Gastrocnemius medialis (tissue), 4 donors: ENCODE measurements at regions of chr9 and their contacts with region 1.

Region 1: DNA sequence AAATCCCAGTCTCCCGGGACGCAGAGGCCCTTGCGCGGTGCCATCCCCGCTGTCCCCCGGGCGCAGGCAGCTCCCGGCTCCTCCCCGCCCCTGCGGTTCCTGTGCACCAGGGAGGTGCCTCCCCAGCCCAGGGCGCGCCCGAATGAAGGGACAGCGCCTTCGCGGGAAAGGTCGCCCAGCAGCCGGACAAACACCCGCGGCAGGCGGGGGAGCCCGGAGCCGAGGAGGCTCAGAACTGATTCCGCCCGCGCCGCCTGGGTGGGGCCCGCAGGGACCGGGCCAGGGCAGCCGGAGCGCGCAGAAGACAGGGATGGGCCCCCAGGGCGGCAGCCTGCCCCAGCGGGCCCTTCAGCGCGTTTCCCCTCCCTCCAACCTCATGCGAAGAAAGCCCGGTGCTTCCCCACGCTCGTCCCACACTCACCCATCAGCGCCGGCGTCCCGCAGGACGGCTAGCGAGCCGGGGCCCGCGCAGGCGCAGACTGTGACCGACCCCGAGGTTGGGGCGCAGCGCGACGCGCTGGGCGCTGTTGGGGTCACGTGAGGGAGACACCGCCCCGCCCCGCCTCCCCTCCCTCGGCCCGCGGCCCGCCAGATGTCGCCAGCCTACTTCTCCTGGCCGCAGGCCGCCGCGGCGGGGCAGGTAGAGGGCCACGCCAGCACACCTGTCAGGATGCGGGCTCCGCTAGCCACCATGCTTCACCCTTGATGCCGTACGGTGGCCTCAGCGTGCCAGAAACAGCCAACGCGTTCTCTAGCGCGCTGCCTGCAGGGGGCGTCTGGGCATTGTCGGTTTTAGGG is at the start of gene SLC25A51:
- DNase-seq: peak; percentile 80 to 91
- ATAC-seq: peak; percentile 92 to 95
- H3K4me3 ChIP-seq: peak within 1 kb of the TSS; percentile 75 to 93 (median 85)
- H3K27ac ChIP-seq: peak within 1 kb of the TSS; percentile 86 to 90 (median 88)
- H3K4me1 ChIP-seq: peaks cover 16 to 17% of the 10 kb centered on the region in 2 donors
- H3K27me3 ChIP-seq: no peaks in the 10 kb centered on the region
- CTCF ChIP-seq: peak; percentile 90 to 97 (median 96)
- POLR2A ChIP-seq: peak; percentile 74 to 81
- total RNA-seq, gene SLC25A51: 16.0 to 30.7 (median 22.2) TPM

Region 2: DNA sequence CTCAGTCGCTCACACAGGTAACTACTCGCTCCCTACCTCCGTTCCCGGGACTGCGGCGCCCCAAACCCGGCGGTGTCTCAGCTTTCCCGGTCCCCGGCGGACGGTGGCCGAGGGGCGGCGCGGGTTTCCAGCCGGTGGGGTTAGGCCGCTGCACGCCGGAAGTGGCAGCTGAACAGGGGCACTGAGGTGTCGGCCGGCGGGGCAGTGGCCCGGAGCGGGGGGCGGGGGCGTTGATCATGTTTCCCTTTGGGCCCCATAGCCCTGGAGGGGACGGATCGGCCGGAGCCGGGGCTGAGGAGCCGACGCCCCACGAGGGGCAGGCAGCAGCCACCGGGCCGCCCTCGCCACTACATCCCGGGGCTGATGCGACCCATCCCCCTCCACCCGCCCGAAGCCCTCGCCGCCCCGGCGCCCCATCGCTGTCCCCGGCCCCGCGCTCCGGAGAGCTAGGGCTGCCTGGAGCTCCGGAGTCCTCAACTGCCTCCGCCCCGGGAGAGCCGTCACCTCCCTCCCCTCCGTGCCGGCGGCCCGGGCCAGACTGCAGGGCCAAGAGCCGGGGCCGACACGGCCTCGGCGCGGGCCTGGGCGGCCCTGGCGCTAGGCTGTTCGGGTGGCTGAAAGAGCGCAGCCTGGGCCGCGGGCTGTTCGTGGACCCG is 103.1 kb before region 1 on chr9 and contains the start of gene DCAF10:
- in situ Hi-C with region 1: loop called in 1 of 4 experiments (anchors 25 kb)
- intact Hi-C with region 1: loop called (anchors 10 kb)
- DNase-seq: peak; percentile 73 to 80
- ATAC-seq: peak; percentile 92 to 93
- H3K4me3 ChIP-seq: peak within 1 kb of the TSS; percentile 55 to 98 (median 80)
- H3K27ac ChIP-seq: peak within 1 kb of the TSS; percentile 74 to 91 (median 86)
- H3K4me1 ChIP-seq: peaks cover 28 to 33% of the 10 kb centered on the region in 2 donors
- H3K27me3 ChIP-seq: no peaks in the 10 kb centered on the region
- CTCF ChIP-seq: peak in 1 of 5 experiments; percentile 38
- POLR2A ChIP-seq: peak; percentile 59 to 77
- total RNA-seq, gene DCAF10: 11.0 to 24.5 (median 17.0) TPM

Region 3: GRCh38 chr9:37984672-37985611 is 81.1 kb after region 1 on chr9:
- in situ Hi-C with region 1: no loop called
- intact Hi-C with region 1: no loop called
- DNase-seq: no peak
- ATAC-seq: peak in 1 of 2 donors; percentile 42
- H3K4me3 ChIP-seq: no peak overlapping the region
- H3K27ac ChIP-seq: no peak overlapping the region
- H3K4me1 ChIP-seq: peaks cover 3 to 6% of the 10 kb centered on the region in 2 donors
- H3K27me3 ChIP-seq: no peaks in the 10 kb centered on the region
- CTCF ChIP-seq: no peak
- POLR2A ChIP-seq: no peak

Region 4: GRCh38 chr9:38017149-38017884 is 113.5 kb after region 1 on chr9:
- in situ Hi-C with region 1: no loop called
- intact Hi-C with region 1: no loop called
- DNase-seq: peak; percentile 53 to 74
- ATAC-seq: peak; percentile 91 to 92
- H3K4me3 ChIP-seq: peak overlapping the region; percentile 16 to 30 (median 21)
- H3K27ac ChIP-seq: peak overlapping the region in 2 of 4 donors; percentile 20 to 26
- H3K4me1 ChIP-seq: peaks cover 29 to 39% of the 10 kb centered on the region in 2 donors
- H3K27me3 ChIP-seq: no peaks in the 10 kb centered on the region
- CTCF ChIP-seq: peak; percentile 39 to 67 (median 58)
- POLR2A ChIP-seq: no peak

Region 5: DNA sequence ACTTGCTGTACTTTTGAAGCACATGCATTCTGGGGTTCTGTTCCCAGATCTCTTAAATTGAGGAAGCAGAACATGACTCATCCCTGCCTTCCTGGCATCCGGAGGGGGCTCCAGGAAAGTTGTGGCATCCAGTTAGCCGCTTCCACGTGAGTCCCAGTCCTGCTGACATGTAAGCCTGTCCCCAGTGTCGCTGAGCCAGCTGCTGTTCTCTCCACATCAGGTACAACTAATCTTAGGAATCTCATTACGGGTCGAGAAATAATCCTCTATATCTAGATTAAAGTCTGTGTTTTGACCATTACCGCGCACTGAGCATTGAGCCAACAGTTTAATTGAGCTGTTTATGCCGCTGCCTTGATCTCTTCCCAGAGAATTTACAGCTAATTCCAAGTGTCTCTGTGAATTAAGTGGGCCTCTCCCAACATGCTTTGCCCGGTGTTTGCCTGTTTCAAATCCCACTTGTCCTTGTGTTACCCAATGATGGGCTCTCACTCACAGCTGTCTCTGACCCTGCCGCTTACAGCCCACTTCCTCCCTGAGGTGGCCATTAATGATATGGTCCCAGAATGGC is 175.7 kb after region 1 on chr9:
- in situ Hi-C with region 1: loop called in 1 of 4 experiments (anchors 10 kb)
- intact Hi-C with region 1: no loop called
- DNase-seq: peak; percentile 54 to 71
- ATAC-seq: peak; percentile 86 to 87
- H3K4me3 ChIP-seq: no peak overlapping the region
- H3K27ac ChIP-seq: peak overlapping the region in 1 of 4 donors; percentile 44
- H3K4me1 ChIP-seq: peaks cover 0 to 9% of the 10 kb centered on the region in 2 donors
- H3K27me3 ChIP-seq: no peaks in the 10 kb centered on the region
- CTCF ChIP-seq: no peak
- POLR2A ChIP-seq: no peak

Region 6: DNA sequence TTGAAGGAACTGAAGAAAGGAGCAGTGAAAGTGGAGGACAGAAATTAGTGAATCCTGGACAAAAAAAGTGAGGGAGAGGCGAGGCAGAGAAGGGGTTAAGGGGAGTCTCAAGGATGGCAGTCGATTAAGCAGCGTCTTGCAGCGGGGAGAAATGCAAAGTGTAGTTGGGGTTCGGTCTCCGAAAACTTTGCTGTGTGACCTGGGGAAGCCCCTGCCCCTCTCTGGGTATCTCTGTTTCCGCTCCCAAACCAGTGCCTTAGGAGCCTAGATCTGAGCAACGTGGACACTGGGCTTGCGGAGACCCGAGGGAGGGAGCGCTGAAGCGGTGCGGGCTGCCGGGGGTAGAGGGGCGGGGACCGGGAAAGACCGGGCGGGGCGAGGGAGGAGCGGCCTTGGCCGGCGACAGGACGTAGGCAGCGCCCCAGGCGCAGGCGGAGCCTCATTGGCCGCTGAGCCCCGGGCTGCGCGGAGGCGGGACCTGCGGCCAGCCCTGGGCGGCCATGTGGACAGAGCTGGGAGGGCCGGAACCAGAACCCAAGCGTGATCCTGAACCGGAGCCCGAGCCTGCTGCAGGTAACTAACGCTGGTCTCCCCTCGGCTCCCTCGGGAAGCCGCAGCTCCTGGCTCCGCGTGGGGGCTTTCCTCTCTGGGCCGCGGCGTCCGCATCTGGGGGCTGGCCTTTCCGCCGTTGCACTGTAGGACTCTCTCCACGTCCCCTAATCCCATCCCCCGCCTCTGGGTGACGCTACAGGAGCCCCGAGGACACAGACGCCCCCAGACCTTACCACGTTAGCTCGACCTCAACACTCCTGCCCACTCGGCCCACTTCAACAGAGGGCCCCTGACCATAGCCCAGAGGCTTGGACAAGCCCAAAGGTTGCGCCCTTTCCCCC is 488.6 kb after region 1 on chr9 and contains the start of gene ALDH1B1:
- in situ Hi-C with region 1: no loop called
- intact Hi-C with region 1: loop called (anchors 2 kb)
- DNase-seq: peak; percentile 78 to 79
- ATAC-seq: peak; percentile 84 to 88
- H3K4me3 ChIP-seq: peak within 1 kb of the TSS; percentile 65 to 82 (median 76)
- H3K27ac ChIP-seq: peak within 1 kb of the TSS; percentile 69 to 88 (median 82)
- H3K4me1 ChIP-seq: peaks cover 20 to 25% of the 10 kb centered on the region in 2 donors
- H3K27me3 ChIP-seq: no peaks in the 10 kb centered on the region
- CTCF ChIP-seq: peak in 2 of 5 experiments; percentile 10 to 26
- POLR2A ChIP-seq: peak; percentile 40 to 79
- total RNA-seq, gene ALDH1B1: 21.0 to 50.9 (median 36.0) TPM